Activated CD4-positive, alpha-beta memory T cell treated with anti-CD3 and anti-CD28 coated beads for 36 hours (primary cell): ENCODE measurements at regions of chr1 and their contacts with region 1.

Region 1: GRCh38 chr1:154198756-154199562 is 7.1 kb upstream of the TPM3 start:
- DNase-seq: peak; percentile 47
- H3K4me3 Mint-ChIP-seq: no peak overlapping the region
- H3K27ac Mint-ChIP-seq: no peak overlapping the region
- H3K4me1 Mint-ChIP-seq: no peaks in the 10 kb centered on the region
- H3K27me3 Mint-ChIP-seq: peaks cover under 1% of the 10 kb centered on the region

Region 2: GRCh38 chr1:154220071-154220969 is 21.4 kb after region 1 on chr1 and contains the start of gene UBAP2L:
- CTCF ChIA-PET with region 1: interaction called, 11 read pairs
- POLR2A ChIA-PET with region 1: interaction called, 4 read pairs
- intact Hi-C with region 1: no loop called
- DNase-seq: peak; percentile 99
- H3K4me3 Mint-ChIP-seq: peak within 1 kb of the TSS; percentile 90
- H3K27ac Mint-ChIP-seq: peak within 1 kb of the TSS; percentile 94
- H3K4me1 Mint-ChIP-seq: peaks cover 68% of the 10 kb centered on the region
- H3K27me3 Mint-ChIP-seq: peaks cover 2% of the 10 kb centered on the region
- total RNA-seq, gene UBAP2L: 180 to 183 TPM